ENCODE measurements at regions of chr1 and their contacts with region 1.

Region 1: GRCh38 chr1:5200006-5200405 is 545.6 kb downstream of the AJAP1 start:
- DNase-seq: no peak
- ATAC-seq: no peak

Region 2: DNA sequence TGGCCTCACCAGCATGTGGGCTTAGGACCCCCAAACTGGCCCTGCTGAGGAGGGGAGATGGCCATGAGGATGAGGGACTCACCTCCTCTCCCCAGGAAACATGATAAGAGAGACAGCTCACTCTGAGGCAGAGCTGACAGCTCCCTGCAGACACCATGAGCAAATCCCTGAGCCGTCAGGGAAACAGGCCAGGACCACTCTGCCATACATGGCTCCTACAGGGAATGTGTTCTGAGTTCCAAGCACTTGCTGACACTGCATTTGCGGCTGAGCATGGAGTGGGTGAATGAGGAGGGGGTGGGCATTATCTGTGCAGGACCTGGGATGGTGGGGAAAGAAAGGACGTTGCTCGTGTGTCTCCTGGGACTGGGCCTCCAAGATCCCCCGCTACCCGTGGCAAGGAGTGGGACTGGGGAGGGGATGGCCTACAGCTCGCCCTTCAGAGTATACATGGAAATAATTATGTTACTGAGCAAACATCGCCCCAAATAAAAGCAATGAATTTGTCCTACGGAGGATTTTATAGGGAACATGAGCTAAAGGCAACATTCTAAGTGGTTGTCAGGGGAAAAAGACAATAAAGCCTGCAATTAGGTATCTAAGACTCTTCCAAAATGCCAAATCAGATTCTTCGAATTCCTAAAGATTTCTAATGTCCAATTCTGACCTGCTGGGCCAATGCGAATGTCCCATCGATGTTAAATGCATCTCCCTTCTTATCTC is 901.5 kb before region 1 on chr1:
- intact Hi-C with region 1: loop called (anchors 10 kb)
- DNase-seq: no peak
- ATAC-seq: peak; percentile 52

Region 3: DNA sequence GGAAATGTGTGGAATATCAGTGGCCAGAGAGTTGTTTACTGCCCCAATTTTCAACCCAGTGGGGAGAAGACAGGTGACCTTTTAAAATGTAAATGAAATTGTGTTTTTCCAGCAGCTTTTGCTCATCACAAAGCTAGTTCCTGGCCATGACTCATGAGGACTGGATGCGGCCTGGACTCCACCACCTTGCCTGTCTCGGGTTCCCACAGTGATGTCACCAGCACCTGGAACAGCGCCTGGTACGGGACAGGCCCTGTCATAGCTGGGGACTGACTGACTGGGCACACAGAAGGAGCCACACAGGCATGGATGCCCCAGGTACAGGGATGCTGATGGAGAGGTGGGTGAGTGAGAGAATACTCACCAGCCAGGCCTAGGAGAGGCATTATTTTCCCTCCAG is 268.5 kb before region 1 on chr1:
- intact Hi-C with region 1: no loop called
- DNase-seq: no peak
- ATAC-seq: no peak

Region 4: DNA sequence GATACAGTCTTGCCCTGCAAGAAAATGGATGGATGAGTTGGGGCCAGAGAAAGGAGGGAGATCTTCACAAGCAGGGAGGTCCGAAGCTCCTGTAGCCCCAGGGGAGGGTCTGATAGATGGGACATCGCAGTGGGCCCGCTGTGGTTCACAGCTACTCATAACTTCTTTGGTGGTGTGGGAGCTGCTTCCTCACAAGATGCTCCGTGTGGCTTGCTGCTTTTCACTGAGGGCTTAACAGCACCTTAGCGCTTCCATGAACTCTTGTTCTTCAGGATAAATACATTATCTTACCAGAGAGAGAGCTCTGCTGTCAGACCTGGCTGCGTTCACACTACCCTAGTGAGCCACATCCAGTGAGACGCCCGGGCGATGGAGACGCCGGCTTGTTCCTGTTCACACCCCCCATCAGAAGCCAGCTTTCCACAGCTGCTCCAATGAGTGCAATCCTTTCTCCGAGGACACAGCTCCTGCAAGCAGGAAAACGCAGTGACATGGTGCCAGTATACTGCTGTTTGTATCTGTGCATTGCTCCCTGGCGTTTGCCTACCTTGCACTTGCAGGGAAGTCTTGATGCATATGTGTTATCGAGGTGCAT is 54.2 kb after region 1 on chr1:
- intact Hi-C with region 1: no loop called
- DNase-seq: no peak
- ATAC-seq: no peak